Mammary epithelial cell (primary cell): ENCODE measurements at regions of chr16 and their contacts with region 1.

Region 1: DNA sequence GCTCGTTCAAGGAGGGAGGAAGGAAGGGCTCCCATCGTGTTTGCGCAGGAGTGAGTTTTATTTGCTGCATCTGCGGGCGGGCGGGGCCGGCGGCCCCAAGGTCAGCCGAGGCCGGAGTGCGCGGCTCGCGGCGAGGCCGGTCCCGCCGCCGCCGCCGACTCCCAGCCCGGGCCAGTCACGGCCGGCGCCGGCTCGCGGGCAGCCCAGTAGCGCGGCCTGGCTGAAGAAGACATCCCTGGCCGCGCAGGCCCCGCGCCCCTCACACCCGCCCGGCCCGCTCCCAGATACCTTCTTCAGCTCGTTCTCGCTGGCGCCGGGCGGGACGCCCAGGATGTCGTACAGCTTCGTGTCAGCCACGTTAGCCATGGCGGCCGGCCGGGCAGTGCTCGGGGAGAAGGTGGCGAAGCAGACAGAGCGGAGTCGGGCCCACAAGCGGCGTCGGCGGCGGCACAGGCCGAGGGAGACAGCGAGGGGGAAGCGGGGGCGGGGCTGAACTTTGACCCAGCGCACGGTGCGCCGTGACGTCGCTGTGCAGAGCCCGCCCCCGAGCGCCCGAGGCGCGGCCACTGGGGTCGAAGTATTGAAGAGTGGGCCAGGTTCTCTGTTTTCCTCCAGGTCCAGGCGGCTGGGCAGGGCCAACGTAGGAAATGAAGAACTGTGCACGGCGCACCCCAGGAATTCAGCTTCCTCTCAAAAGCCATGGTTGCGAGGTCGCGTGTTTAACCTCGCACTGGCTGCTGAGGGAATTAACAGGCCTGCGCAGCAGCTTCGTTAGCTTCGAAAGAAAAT is at the start of gene DNAJA2:
- DNase-seq: peak; percentile 85
- H3K4me3 ChIP-seq: peak within 1 kb of the TSS; percentile 86 to 99 (median 96)
- H3K27ac ChIP-seq: peak within 1 kb of the TSS; percentile 78
- H3K4me1 ChIP-seq: peaks cover 16% of the 10 kb centered on the region
- H3K27me3 ChIP-seq: no peaks in the 10 kb centered on the region
- CTCF ChIP-seq: no peak
- total RNA-seq, gene DNAJA2: 64.1 to 72.0 TPM

Region 2: DNA sequence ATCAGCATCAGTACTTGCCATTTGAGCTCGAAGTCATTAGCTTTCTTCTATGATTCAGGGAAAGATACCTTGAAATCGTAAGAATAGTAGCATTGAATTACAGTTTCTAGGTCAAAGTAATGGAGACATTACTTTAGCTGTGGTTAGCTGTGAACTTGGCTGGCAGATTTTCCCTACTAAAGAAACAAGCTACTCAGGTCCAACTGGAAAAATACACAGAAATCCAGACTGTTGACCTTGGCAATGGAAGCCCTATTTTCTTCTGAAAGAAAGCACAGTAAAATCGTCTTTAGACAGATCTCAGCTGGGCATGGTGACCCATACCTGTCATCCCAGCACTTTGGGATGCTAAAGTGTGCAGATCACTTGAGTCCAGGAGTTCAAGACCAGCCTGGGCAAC is 13.5 kb after region 1 on chr16:
- CTCF ChIA-PET with region 1: no interaction called
- dilution Hi-C with region 1: no loop called
- in situ Hi-C with region 1: no loop called
- intact Hi-C with region 1: loop called (anchors 2 kb)
- DNase-seq: no peak
- H3K4me3 ChIP-seq: no peak overlapping the region
- H3K27ac ChIP-seq: no peak overlapping the region
- H3K4me1 ChIP-seq: no peaks in the 10 kb centered on the region
- H3K27me3 ChIP-seq: no peaks in the 10 kb centered on the region
- CTCF ChIP-seq: no peak

Region 3: GRCh38 chr16:47018223-47018891 is 45.0 kb after region 1 on chr16:
- CTCF ChIA-PET with region 1: no interaction called
- dilution Hi-C with region 1: no loop called
- in situ Hi-C with region 1: no loop called
- intact Hi-C with region 1: loop called (anchors 1 kb)
- DNase-seq: peak; percentile 56
- H3K4me3 ChIP-seq: no peak overlapping the region
- H3K27ac ChIP-seq: no peak overlapping the region
- H3K4me1 ChIP-seq: no peaks in the 10 kb centered on the region
- H3K27me3 ChIP-seq: no peaks in the 10 kb centered on the region
- CTCF ChIP-seq: peak; percentile 57 to 82

Region 4: GRCh38 chr16:47371615-47372014 is 398.2 kb after region 1 on chr16:
- CTCF ChIA-PET with region 1: no interaction called
- dilution Hi-C with region 1: no loop called
- in situ Hi-C with region 1: no loop called
- intact Hi-C with region 1: no loop called
- DNase-seq: no peak
- H3K4me3 ChIP-seq: no peak overlapping the region
- H3K27ac ChIP-seq: no peak overlapping the region
- H3K4me1 ChIP-seq: no peaks in the 10 kb centered on the region
- H3K27me3 ChIP-seq: no peaks in the 10 kb centered on the region
- CTCF ChIP-seq: no peak